ENCODE measurements at regions of chr7 and their contacts with region 1.

Region 1: GRCh38 chr7:21256310-21256877 is 171.5 kb upstream of the SP4 start:
- DNase-seq: no peak
- ATAC-seq: no peak
- H3K4me3 ChIP-seq: no peak overlapping the region
- H3K27ac ChIP-seq: no peak overlapping the region
- H3K4me1 ChIP-seq: no peaks in the 10 kb centered on the region
- H3K27me3 ChIP-seq: peaks cover 2 to 45% (median 3%) of the 10 kb centered on the region in 3 donors
- CTCF ChIP-seq: peak; percentile 40

Region 2: GRCh38 chr7:20778063-20778721 is 478.2 kb before region 1 on chr7:
- intact Hi-C with region 1: loop called in 1 of 2 experiments (anchors 2 kb)
- DNase-seq: peak in 1 of 2 donors; percentile 16
- ATAC-seq: peak; percentile 72 to 84 (median 79)
- H3K4me3 ChIP-seq: peak overlapping the region; percentile 54
- H3K27ac ChIP-seq: no peak overlapping the region
- H3K4me1 ChIP-seq: no peaks in the 10 kb centered on the region
- H3K27me3 ChIP-seq: peaks cover 16 to 100% (median 29%) of the 10 kb centered on the region in 3 donors
- CTCF ChIP-seq: peak; percentile 51

Region 3: DNA sequence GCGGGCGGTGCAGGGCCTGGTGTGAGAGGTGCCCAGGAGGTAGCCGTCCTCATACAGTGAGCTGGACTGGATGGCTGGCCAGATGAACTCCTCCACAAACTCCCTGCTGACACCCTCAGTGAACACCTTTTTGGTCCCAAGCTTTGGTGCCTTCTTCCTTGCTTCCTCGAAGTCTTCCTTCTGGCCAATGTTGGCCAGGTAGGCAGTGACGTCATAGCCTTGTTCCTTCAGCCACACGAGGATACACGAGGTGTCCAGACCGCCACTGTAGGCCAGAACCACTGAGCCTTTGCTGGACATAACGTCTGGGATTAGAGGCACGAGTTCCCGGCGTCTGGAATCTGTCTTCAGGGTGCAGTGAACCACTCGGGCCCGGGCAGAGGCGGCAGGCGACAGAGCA is 35.3 kb before region 1 on chr7:
- intact Hi-C with region 1: no loop called
- DNase-seq: no peak
- ATAC-seq: no peak
- H3K4me3 ChIP-seq: no peak overlapping the region
- H3K27ac ChIP-seq: no peak overlapping the region
- H3K4me1 ChIP-seq: no peaks in the 10 kb centered on the region
- H3K27me3 ChIP-seq: no peaks in the 10 kb centered on the region
- CTCF ChIP-seq: no peak

Region 4: DNA sequence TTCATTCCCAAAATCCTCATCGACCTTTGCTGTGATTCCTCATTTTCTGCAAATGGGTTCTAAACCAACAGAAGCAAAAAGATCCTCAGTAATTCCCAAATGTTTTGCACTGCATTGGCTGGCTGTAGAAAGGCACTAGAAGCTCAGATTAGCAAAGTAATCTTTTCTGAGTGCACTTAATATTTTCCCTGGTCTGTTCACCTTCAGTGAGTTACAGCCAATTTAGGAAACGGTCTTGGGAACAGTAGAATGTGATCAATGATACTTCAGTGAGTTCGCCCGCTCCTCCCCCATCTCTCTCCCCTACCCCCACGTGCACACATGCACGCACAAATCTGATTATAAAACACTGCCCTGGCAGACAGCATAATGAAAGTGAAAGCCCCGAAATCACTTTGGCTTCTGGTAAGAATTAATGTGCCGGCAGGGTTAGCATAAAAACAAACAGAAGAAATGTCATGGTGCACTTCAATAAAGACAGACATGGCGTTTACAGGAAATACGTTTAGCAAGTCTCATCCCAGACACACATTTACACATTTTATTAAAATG is 890.6 kb after region 1 on chr7:
- intact Hi-C with region 1: no loop called
- DNase-seq: no peak
- ATAC-seq: no peak
- H3K4me3 ChIP-seq: no peak overlapping the region
- H3K27ac ChIP-seq: no peak overlapping the region
- H3K4me1 ChIP-seq: no peaks in the 10 kb centered on the region
- H3K27me3 ChIP-seq: peaks cover 0 to 3% (median 3%) of the 10 kb centered on the region in 3 donors
- CTCF ChIP-seq: no peak